ENCODE measurements at regions of chr19 and their contacts with region 1.

Region 1: DNA sequence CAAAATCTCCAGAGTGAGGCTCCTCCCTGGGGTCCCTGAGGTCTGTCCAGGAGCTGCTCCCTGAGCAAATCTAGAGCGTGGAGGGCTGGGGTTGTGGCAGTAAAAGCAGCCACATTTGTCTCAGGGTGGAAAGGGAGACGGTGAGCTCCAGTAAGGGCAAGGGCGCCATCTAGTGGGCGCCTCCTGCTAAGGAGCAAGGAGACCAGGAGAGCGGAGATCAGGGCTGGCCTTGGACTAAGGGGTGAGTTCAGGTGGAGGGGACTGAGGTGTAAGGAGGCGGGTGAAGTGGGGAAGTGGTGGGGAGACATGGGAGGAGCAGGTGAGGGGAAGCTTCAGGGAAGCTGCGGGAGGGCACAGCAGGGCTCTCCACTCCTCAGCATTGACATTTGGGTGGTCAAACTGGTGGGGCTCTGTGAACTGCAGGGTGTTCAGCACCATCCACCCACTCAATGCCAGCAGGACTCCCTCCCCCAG is 5.3 kb upstream of the CEACAM21 start:
- DNase-seq: peak; percentile 91
- H3K4me3 Mint-ChIP-seq: no peak overlapping the region
- H3K27ac Mint-ChIP-seq: no peak overlapping the region
- H3K4me1 Mint-ChIP-seq: peaks cover 3% of the 10 kb centered on the region
- H3K27me3 Mint-ChIP-seq: peaks cover 97% of the 10 kb centered on the region
- CTCF ChIP-seq: peak; percentile 94

Region 2: GRCh38 chr19:41341669-41342490 is 228.8 kb before region 1 on chr19:
- CTCF ChIA-PET with region 1: interaction called, 4 read pairs
- intact Hi-C with region 1: loop called (anchors 10 kb)
- DNase-seq: peak; percentile 69
- H3K4me3 Mint-ChIP-seq: no peak overlapping the region
- H3K27ac Mint-ChIP-seq: no peak overlapping the region
- H3K4me1 Mint-ChIP-seq: no peaks in the 10 kb centered on the region
- H3K27me3 Mint-ChIP-seq: no peaks in the 10 kb centered on the region
- CTCF ChIP-seq: peak; percentile 30

Region 3: DNA sequence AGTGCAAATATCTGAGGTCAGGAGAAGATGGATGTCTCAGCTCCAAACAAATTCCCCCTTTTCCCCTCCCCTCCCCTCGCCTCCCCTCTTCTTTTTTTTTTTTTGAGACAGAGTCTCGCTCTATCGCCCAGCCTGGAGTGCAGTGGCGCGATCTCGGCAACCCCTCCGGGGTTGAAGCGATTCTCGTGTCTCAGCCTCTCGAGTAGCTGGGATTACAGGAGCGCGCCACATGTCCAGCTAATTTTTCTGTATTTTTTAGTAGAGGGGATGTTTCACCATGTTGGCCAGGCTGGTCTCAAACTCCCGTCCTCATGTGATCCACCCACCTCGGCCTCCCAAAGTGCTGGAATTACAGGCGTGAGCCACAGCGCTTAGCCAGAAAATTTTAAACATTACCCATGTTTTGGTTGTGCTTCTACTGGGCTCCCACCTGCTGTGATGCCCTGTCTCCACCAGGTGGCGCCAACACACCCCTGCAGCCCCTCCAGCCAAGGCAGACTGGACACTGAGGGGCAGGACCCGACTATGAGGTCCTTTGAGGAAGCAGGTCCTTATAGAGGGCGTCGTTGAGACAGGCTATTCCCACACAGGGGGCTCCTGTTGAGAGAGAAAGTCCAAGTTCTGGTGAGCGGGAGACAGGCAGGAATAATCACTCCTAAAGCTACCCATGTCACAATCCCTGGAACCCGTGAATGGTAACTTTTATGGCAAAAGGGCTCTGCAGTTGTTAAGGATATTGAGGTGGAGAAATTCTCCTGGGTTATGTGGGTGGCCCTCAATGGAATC is 121.4 kb before region 1 on chr19:
- CTCF ChIA-PET with region 1: interaction called, 26 read pairs
- intact Hi-C with region 1: loop called (anchors 1 kb)
- DNase-seq: peak; percentile 87
- H3K4me3 Mint-ChIP-seq: peak overlapping the region; percentile 51
- H3K27ac Mint-ChIP-seq: peak overlapping the region; percentile 11
- H3K4me1 Mint-ChIP-seq: peaks cover 11% of the 10 kb centered on the region
- H3K27me3 Mint-ChIP-seq: peaks cover 32% of the 10 kb centered on the region
- CTCF ChIP-seq: peak; percentile 97

Region 4: DNA sequence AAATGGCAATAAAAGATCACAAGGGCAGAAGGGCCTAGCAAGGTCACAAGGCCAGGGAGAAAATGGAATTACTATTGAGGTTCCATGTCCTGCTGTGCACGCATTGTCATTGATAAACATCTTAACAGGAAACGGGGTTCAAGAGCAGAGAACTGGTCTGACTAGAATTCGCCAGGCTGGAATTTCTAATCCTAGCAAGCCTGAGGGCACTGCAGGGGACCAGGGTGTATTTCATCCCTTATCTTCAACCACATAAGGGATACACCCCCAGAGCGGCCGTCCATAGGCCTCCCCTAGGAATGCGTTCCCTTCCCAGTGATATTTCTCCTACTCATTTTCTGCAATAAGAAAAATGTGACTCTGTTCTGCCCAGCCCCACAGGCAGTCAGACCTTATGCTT is 108.2 kb before region 1 on chr19:
- CTCF ChIA-PET with region 1: no interaction called
- intact Hi-C with region 1: loop called (anchors 5 kb)
- DNase-seq: peak; percentile 51
- H3K4me3 Mint-ChIP-seq: peak overlapping the region; percentile 61
- H3K27ac Mint-ChIP-seq: no peak overlapping the region
- H3K4me1 Mint-ChIP-seq: peaks cover 31% of the 10 kb centered on the region
- H3K27me3 Mint-ChIP-seq: peaks cover 49% of the 10 kb centered on the region
- CTCF ChIP-seq: no peak

Region 5: DNA sequence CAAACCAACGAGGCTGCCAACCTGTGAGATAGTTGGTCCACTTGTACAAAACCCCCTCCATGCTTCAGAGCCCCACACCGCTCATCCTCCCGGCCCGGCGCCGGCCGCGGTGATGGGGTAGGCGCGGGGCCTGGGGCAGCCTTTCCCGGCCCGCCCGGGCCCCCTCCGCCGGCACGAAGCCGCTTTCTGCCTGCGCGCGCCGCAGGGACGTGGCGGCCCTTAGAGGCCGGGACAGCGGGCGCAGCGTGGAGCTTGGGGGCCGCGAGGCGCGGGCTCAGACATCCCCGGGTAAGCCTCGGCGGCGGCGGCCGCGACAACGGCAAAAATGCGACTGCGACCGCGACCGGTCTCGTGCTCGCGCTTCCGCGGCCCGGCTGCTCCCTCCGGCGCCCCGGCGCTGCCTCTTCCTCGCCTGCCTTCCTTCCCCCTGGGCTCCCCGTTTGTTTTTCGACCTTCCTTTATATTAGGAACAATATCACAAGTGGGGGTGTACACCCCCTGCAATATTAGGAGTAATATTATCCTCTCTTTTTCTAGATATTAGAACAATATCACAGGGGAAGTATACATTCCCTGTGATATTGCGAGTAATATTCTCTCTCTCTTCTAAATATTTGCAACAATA is 48.6 kb before region 1 on chr19:
- CTCF ChIA-PET with region 1: no interaction called
- intact Hi-C with region 1: loop called (anchors 2 kb)
- DNase-seq: peak; percentile 21
- H3K4me3 Mint-ChIP-seq: peak overlapping the region; percentile 46
- H3K27ac Mint-ChIP-seq: no peak overlapping the region
- H3K4me1 Mint-ChIP-seq: peaks cover 7% of the 10 kb centered on the region
- H3K27me3 Mint-ChIP-seq: peaks cover 100% of the 10 kb centered on the region
- CTCF ChIP-seq: no peak